ENCODE measurements at regions of chr15 and their contacts with region 1.

Region 1: DNA sequence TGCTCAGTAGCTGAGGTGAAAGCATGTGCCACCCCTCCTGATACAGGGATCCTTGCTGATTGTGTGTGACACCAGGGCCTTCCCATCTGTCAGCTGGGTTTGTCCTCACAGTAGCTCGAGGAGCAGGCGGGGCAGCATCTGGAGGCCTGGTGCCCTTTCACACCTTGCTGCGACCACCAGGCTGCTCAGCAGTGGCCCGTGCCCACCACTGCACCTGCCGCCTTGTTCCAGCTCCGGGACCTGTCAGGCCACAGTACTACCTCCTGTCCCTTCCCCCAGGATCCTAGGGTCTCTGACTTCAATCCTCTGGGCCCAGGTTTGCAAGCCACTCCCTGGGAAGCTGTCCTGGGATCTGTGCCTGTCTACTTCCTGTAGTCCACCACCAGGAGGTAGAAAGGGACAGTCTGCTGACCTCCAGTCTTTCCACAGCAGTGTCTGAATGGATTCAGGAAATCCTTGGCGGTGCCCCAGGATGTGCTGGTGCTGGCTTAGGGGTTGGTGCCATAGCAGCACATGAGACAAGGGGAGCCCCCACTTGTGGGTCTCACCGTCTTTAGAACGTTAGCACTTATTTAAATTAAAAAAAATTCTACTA is 27.5 kb downstream of the APBA2 start:
- DNase-seq: no peak
- ATAC-seq: peak; percentile 64; the same call in 1 of the 2 replicates
- H3K4me3 ChIP-seq: no peak overlapping the region
- H3K27ac ChIP-seq: no peak overlapping the region
- H3K4me1 ChIP-seq: no peaks in the 10 kb centered on the region
- H3K27me3 ChIP-seq: no peaks in the 10 kb centered on the region
- CTCF ChIP-seq: no peak

Region 2: DNA sequence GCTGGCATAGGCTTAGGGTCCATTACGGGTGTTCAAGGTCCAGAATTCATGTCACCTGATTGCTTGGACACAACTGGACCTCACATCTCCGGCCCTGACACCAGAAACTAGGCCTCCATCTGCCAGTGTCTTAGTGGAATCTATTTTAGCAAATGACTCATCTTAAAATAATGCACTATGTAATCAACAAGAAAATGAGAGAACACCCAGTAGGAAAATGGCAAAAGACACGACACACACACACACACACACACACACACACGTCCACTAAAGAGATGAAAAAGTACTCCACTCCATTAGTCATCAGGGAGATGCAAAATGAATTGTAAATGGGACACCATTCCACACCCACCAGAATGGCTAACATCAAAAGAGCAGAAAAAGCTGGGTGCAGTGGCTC is 16.3 kb before region 1 on chr15:
- CTCF ChIA-PET with region 1: no interaction called
- POLR2A ChIA-PET with region 1: no interaction called
- in situ Hi-C with region 1: no loop called
- intact Hi-C with region 1: no loop called
- DNase-seq: no peak
- ATAC-seq: no peak
- H3K4me3 ChIP-seq: no peak overlapping the region
- H3K27ac ChIP-seq: no peak overlapping the region
- H3K4me1 ChIP-seq: no peaks in the 10 kb centered on the region
- H3K27me3 ChIP-seq: no peaks in the 10 kb centered on the region
- CTCF ChIP-seq: no peak

Region 3: GRCh38 chr15:29071232-29071881 is 158.1 kb after region 1 on chr15:
- CTCF ChIA-PET with region 1: interaction called, 10 read pairs
- POLR2A ChIA-PET with region 1: no interaction called
- in situ Hi-C with region 1: no loop called
- intact Hi-C with region 1: no loop called
- DNase-seq: no peak
- ATAC-seq: no peak
- H3K4me3 ChIP-seq: no peak overlapping the region
- H3K27ac ChIP-seq: no peak overlapping the region
- H3K4me1 ChIP-seq: no peaks in the 10 kb centered on the region
- H3K27me3 ChIP-seq: no peaks in the 10 kb centered on the region
- CTCF ChIP-seq: no peak

Region 4: GRCh38 chr15:29170521-29170920 is 257.3 kb after region 1 on chr15:
- CTCF ChIA-PET with region 1: no interaction called
- POLR2A ChIA-PET with region 1: no interaction called
- in situ Hi-C with region 1: no loop called
- intact Hi-C with region 1: no loop called
- DNase-seq: no peak
- ATAC-seq: no peak
- H3K4me3 ChIP-seq: no peak overlapping the region
- H3K27ac ChIP-seq: no peak overlapping the region
- H3K4me1 ChIP-seq: no peaks in the 10 kb centered on the region
- H3K27me3 ChIP-seq: peaks cover 2% of the 10 kb centered on the region; the same call in 1 of the 2 replicates
- CTCF ChIP-seq: no peak

Measured in Panc1 (cell line).